Dendritic cell treated with granulocyte-macrophage colony-stimulating factor and Interleukin-4, amounts not matched to agents 40 ng/mL and 50 ng/mL, for 4 days (primary cell): ENCODE measurements at regions of chr13 and their contacts with region 1.

Region 1: GRCh38 chr13:23871616-23872220 is 17.5 kb downstream of the MIPEP start:
- H3K4me3 Mint-ChIP-seq: no peak overlapping the region
- H3K27ac Mint-ChIP-seq: no peak overlapping the region
- H3K4me1 Mint-ChIP-seq: no peaks in the 10 kb centered on the region
- H3K27me3 Mint-ChIP-seq: no peaks in the 10 kb centered on the region

Region 2: DNA sequence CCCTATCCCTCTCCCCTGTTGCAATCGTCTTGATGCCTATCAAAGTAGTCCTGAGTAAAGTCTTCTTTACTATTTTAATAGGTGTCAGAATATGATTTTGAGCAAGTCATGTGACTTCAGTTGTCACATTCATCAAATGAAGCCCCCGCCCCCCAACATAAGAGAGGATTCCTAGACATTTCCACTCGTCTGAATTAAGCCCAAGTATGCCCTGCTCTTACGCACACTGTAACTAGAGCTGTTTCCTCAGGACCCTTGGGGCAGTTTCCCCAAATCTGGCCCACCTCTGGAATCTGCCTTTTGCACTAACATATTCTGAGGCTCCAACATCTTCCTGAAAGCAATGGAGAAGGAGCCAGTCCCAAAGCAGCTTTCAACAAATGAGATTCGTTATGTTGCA is 463.7 kb before region 1 on chr13:
- intact Hi-C with region 1: loop called (anchors 5 kb)
- H3K4me3 Mint-ChIP-seq: no peak overlapping the region
- H3K27ac Mint-ChIP-seq: no peak overlapping the region
- H3K4me1 Mint-ChIP-seq: no peaks in the 10 kb centered on the region
- H3K27me3 Mint-ChIP-seq: peaks cover 1% of the 10 kb centered on the region

Region 3: DNA sequence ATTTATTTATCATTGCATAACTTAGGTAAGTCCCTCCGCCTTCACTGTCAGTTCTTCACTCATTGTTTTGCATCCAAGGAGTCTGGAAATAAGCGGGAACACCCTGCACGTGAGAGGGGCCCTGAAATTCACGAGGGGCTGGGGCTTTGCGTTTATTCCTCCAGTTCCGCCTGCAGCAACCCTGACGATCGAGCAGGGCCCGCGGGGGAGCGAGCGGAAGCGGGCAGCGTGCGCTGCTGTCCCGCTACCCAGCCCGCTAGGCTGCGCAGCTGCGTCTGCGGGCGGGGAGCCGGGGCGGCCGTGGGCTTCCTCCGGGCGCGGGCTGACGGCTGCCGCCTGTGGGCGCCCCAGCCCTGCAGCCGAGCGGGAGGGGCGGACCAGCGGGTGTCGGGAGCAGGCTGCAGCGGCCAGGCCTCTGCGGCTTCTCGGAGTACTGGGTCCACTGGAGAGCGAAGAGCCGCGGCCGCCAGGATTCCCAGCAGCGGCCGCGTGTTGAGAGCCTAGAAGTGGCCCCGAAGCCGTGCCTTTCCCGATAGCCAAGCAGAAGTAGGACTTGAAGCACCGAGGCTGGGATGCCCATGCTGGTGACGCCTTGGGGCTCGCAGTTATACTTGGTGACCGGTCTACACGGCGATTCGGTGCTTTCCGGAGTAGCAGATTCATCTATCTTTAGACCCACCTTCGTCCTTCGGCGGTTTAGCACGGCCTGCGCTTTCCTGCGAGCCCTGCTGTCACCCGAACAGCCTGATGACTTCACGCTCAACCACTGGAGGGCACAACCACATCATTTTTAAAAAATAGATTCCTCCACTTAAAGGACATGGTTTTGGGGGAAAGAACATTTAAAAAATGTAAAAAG is 405.3 kb before region 1 on chr13:
- intact Hi-C with region 1: loop called (anchors 1 kb)
- H3K4me3 Mint-ChIP-seq: peak overlapping the region; percentile 74
- H3K27ac Mint-ChIP-seq: peak overlapping the region; percentile 31
- H3K4me1 Mint-ChIP-seq: peaks cover 33% of the 10 kb centered on the region
- H3K27me3 Mint-ChIP-seq: peaks cover 11% of the 10 kb centered on the region

Region 4: GRCh38 chr13:23510979-23511735 is 360.6 kb before region 1 on chr13:
- intact Hi-C with region 1: loop called (anchors 2 kb)
- H3K4me3 Mint-ChIP-seq: no peak overlapping the region
- H3K27ac Mint-ChIP-seq: no peak overlapping the region
- H3K4me1 Mint-ChIP-seq: no peaks in the 10 kb centered on the region
- H3K27me3 Mint-ChIP-seq: peaks cover 4% of the 10 kb centered on the region

Region 5: GRCh38 chr13:23579072-23579895 is 292.4 kb before region 1 on chr13:
- intact Hi-C with region 1: loop called (anchors 2 kb)
- H3K4me3 Mint-ChIP-seq: peak overlapping the region; percentile 80
- H3K27ac Mint-ChIP-seq: peak overlapping the region; percentile 70
- H3K4me1 Mint-ChIP-seq: no peaks in the 10 kb centered on the region
- H3K27me3 Mint-ChIP-seq: peaks cover 52% of the 10 kb centered on the region

Region 6: GRCh38 chr13:23833733-23834626 is 37.7 kb before region 1 on chr13:
- intact Hi-C with region 1: no loop called
- H3K4me3 Mint-ChIP-seq: no peak overlapping the region
- H3K27ac Mint-ChIP-seq: no peak overlapping the region
- H3K4me1 Mint-ChIP-seq: no peaks in the 10 kb centered on the region
- H3K27me3 Mint-ChIP-seq: no peaks in the 10 kb centered on the region

Region 7: GRCh38 chr13:24491845-24492244 is 620.1 kb after region 1 on chr13:
- intact Hi-C with region 1: no loop called
- H3K4me3 Mint-ChIP-seq: no peak overlapping the region
- H3K27ac Mint-ChIP-seq: no peak overlapping the region
- H3K4me1 Mint-ChIP-seq: no peaks in the 10 kb centered on the region
- H3K27me3 Mint-ChIP-seq: no peaks in the 10 kb centered on the region